Right ventricle myocardium inferior (tissue), 1 donor: ENCODE measurements at regions of chr20 and their contacts with region 1.

Region 1: DNA sequence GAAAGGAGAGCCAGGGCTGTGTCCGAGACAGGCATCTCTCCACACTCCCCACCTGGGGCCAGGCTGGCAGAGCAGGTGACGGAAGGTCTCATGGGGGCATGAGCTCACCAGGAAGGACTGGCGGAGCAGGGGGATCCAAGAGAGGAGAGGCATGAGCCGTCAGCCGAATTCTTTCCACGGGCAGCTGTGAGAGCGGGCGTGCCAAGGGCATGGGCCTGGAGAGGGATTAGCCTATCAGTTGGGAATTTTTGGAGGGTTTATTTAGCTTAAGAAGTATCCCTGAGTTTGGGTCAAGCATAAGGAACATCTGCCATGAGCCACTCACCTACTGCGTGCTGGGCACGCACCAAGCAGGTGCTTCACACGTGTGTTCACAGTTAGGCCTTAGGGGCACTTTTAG is 60.2 kb upstream of the ZNFX1 start:
- DNase-seq: no peak
- ATAC-seq: no peak

Region 2: GRCh38 chr20:49256261-49256660 is 81.8 kb before region 1 on chr20:
- intact Hi-C with region 1: no loop called
- DNase-seq: no peak
- ATAC-seq: no peak

Region 3: DNA sequence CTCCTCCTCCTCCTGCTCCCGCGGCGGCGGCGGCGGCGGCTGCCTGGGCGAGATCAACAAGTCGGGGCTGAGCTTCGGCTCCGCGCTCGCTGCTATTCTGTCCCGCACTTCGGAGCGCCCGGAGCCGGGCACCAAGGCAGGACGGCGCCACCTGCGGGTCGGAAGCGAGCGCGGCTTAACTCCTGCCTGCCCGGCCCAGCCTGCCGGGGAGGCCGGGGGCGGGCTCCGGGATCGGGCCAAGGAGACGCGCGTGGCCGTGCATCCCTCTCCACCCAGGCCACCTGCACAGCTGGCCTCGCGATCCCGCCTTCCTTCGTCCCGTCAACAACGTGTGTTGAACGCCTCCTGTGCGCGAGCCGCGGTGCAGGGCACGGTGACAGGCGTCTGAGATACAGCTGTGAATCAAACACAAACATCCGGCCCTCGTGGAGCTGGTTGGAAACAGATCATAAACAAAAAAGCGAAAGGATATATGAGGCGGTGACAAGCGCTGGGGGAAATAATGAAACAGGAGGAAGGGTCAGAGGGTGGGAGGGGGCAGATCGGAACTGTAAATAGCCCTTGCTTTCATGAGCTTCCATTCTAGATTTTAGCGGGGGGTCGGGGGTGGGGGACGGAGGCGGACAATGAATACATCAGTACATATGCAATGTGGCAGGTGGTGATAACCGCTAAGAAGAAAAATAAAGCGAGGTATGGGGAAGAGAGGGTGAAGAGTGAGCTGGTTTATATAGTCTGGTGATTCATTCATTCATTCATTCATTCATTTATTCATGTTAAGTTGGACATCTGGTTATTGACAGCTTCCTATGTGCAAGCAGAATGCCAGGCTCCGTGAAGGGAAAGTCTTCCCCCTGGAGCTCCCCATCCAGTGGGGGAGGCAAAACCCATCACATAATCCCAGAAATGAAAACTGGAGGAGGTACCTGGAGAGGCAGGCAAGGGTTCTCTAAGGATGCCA is 146.4 kb after region 1 on chr20:
- intact Hi-C with region 1: loop called (anchors 1 kb)
- DNase-seq: peak; percentile 89
- ATAC-seq: peak; percentile 87

Region 4: DNA sequence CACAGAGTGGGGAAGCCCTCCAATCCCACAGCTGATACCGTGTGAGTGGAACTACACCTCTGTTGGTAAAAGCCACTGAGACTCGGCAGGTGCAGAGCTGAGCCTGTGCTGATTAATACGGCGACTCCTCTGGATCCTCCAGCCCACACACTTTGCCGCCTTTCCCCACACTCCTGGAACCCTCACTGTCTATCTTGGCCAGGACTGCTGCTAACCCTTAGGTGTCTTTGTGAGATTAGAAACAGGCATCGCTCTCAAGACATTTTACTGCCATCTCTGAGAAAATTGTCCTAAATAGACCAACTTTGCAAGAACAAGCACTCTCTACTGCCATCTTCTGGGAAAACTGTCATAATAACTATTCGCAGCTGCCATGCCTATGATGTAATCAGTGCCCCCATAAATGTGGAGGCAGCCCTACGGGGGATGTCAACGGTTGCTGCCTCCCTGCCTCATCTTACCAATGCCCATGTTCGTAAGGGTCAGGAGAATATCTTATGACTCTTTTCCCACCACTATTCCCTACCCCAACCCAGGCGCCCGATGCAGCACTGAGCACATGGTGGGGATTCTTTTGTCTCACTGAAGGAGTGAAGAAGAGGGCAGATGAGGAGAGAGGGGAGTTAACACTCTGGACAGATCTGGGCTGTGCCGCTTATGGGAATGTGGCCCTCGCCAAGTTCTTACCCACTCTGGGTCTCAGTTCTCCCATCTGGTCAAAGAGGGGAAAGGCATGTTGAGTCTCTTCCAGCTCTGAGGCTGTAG is 170.6 kb after region 1 on chr20:
- intact Hi-C with region 1: loop called (anchors 1 kb)
- DNase-seq: no peak
- ATAC-seq: no peak

Region 5: GRCh38 chr20:49534255-49534712 is 196.2 kb after region 1 on chr20:
- intact Hi-C with region 1: loop called (anchors 1 kb)
- DNase-seq: no peak
- ATAC-seq: no peak

Region 6: GRCh38 chr20:49853640-49854039 is 515.6 kb after region 1 on chr20:
- intact Hi-C with region 1: loop called (anchors 10 kb)
- DNase-seq: no peak
- ATAC-seq: no peak